Right cardiac atrium (tissue), 5 donors: ENCODE measurements at regions of chr6 and their contacts with region 1.

Region 1: GRCh38 chr6:52263709-52264540 is 19.6 kb upstream of the IL17F start:
- DNase-seq: peak; percentile 33 to 75 (median 72)
- ATAC-seq: peak; percentile 65 to 68
- H3K4me3 ChIP-seq: no peak overlapping the region
- H3K27ac ChIP-seq: no peak overlapping the region
- H3K4me1 ChIP-seq: no peaks in the 10 kb centered on the region
- H3K27me3 ChIP-seq: no peaks in the 10 kb centered on the region

Region 2: DNA sequence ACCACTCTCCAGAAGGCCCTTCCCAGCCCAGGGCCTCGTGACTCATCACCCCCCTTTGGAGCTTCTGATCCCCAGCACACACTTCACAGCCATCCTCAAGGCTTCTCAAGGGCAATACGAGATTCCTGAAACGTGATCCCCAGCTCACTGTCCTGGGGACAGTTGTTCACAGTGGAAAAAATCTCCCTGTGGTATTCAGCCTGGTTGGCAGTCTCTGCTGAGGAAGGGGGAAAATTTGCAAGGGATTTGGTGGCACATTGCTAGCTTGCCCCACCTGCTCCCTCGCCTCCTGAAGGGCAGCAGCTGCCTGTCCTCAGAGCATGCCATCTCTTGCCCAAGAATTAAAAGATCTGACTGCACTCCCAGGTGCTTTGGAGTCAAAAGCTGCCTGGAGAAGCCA is 155.8 kb before region 1 on chr6:
- intact Hi-C with region 1: loop called in 1 of 4 experiments (anchors 10 kb)
- DNase-seq: no peak
- ATAC-seq: no peak
- H3K4me3 ChIP-seq: no peak overlapping the region
- H3K27ac ChIP-seq: no peak overlapping the region
- H3K4me1 ChIP-seq: no peaks in the 10 kb centered on the region
- H3K27me3 ChIP-seq: no peaks in the 10 kb centered on the region